ENCODE measurements at regions of chr18 and their contacts with region 1.

Region 1: GRCh38 chr18:3771121-3771971 is 321.4 kb downstream of the TGIF1 start:
- DNase-seq: peak; percentile 91
- ATAC-seq: peak; percentile 99 to 100
- H3K4me3 ChIP-seq: peak overlapping the region; percentile 31
- H3K27ac ChIP-seq: peak overlapping the region; percentile 32
- H3K4me1 ChIP-seq: peaks cover 26% of the 10 kb centered on the region
- H3K27me3 ChIP-seq: no peaks in the 10 kb centered on the region
- CTCF ChIP-seq: peak; percentile 98

Region 2: DNA sequence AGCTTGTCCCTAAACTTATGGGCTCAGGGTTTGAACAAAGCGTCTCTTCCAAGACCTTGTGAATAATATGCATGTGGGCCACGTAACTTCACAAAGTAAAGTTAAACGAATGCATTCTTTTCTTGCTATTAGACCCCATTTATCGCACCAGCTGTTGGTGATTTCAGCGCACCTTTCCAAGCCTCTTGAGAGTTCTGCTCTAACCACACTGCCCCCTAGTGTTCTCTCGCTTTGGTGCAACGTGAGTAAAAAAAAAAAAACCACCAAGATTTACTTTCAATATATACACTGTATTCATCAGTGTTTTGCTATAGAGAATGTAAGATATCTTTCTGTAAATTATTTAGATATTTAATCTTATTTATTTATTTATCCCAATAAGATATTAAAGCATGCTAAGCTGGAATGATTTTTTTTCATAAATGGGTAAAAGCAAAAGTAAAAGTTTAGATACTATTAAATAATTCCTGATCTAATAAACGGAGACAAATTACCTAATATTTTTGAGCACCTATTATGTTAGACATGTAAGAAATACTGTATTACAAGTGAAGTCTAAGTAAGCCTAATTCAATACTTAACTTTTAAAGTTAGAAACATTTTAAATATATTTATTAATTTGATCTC is 224.2 kb after region 1 on chr18:
- intact Hi-C with region 1: loop called (anchors 5 kb)
- DNase-seq: no peak
- ATAC-seq: peak; percentile 56 to 73
- H3K4me3 ChIP-seq: no peak overlapping the region
- H3K27ac ChIP-seq: no peak overlapping the region
- H3K4me1 ChIP-seq: no peaks in the 10 kb centered on the region
- H3K27me3 ChIP-seq: peaks cover 5% of the 10 kb centered on the region
- CTCF ChIP-seq: peak; percentile 89

Measured in lower lobe of right lung (tissue), 2 donors.